SK-N-SH (cell line): ENCODE measurements at regions of chr10 and their contacts with region 1.

Region 1: DNA sequence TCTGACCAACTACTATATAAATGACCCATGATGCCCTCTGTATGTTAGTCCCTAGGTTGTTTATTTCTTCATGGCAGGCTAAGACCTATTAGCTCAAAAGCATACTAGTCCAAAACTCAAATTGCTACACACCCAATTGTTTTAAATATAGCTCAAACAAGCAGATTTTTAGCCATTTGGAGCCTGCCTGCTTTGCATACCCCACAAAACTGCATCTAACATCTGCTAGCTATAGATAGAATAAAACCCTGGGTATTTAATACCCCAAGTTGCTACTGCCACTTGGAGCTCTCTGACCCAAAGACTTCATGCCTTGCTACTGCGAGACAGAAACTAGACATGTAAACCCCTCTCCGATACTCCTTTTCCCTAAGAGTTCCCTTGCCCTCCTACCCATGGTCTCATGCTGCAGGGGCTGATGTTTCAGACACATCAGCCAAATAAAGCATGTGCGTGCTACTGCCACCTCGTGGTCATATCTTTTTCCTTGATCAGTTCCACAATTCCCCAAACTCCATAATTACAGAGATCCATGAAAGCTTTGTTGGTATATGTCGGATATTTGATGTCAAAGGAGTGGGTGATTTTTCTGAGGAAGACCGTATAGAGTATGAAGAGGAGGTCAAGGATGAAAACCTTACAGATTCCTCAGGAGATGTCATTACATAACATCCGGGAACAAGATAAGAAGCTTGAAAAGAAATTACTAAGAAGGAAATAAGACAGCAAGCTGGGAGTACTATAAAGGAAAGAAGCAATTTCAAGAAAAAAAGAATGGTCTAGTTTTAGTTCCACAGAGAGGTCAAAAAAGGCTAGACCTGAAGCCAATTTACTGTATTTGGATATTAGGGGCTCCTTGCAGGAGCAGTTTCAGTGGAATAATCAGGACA is 386.6 kb downstream of the SH2D4B start:
- DNase-seq: peak; percentile 15
- H3K4me3 ChIP-seq: peak overlapping the region in 1 of 2 experiments; percentile 24; a peak in 1 of 4 replicates
- H3K27ac ChIP-seq: no peak overlapping the region
- H3K4me1 ChIP-seq: no peaks in the 10 kb centered on the region
- H3K27me3 ChIP-seq: no peaks in the 10 kb centered on the region
- CTCF ChIP-seq: peak; percentile 67
- EP300 ChIP-seq: no peak
- RAD21 ChIP-seq: peak; percentile 65

Region 2: GRCh38 chr10:80382989-80383388 is 541.3 kb before region 1 on chr10:
- CTCF ChIA-PET with region 1: interaction called, 18 read pairs
- POLR2A ChIA-PET with region 1: no interaction called
- DNase-seq: peak; percentile 68
- H3K4me3 ChIP-seq: peak overlapping the region in 1 of 2 experiments; percentile 7; a peak in 1 of 4 replicates
- H3K27ac ChIP-seq: no peak overlapping the region
- H3K4me1 ChIP-seq: peaks cover 0 to 3% of the 10 kb centered on the region in 2 experiments; a peak in 1 of 4 replicates
- H3K27me3 ChIP-seq: no peaks in the 10 kb centered on the region; the same call in 1 of the 2 replicates
- CTCF ChIP-seq: peak; percentile 81
- EP300 ChIP-seq: no peak
- RAD21 ChIP-seq: peak; percentile 85

Region 3: DNA sequence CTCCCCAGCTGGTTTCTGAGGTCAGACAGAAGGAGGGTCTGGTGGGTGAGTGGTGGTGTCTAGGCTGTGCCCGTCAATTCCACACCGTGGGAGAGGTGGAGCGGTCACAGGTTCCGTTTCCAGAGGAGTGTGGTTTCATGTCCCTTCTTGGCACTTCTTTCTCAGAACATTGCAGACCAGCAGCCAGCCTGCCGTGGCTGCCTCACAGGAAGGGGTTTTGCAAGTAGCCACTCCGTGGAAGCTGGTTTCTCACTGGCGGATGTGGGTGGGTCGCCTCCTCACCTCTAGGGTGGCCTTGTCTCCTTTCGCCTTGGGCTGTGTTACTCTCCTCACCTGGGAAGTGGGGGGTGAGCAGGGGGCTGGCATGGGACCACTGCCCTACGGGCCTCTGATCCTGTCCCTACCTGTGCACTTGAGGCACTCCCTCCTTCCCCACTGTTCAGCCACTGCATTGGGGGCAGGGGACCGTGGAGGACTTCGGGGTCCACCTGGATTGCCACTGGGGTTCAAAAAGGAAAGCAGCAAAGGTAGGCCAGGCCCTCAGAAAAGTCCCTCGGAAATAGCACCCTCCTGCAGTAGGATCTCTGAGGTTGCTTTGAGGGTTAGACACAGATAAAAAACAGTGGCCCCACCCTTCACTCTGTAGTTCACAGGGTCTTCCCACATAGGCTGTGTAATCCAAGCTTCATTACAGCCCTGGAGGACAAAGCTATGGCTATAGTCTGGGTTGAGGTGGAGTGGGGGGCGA is 436.3 kb before region 1 on chr10:
- CTCF ChIA-PET with region 1: no interaction called
- POLR2A ChIA-PET with region 1: interaction called, 11 read pairs
- DNase-seq: no peak
- H3K4me3 ChIP-seq: no peak overlapping the region
- H3K27ac ChIP-seq: no peak overlapping the region
- H3K4me1 ChIP-seq: peaks cover 0 to 6% of the 10 kb centered on the region in 2 experiments; a peak in 1 of 4 replicates
- H3K27me3 ChIP-seq: no peaks in the 10 kb centered on the region
- CTCF ChIP-seq: no peak
- EP300 ChIP-seq: no peak
- RAD21 ChIP-seq: no peak

Region 4: GRCh38 chr10:80670763-80671162 is 253.5 kb before region 1 on chr10:
- CTCF ChIA-PET with region 1: interaction called, 185 read pairs
- POLR2A ChIA-PET with region 1: no interaction called
- DNase-seq: no peak
- H3K4me3 ChIP-seq: no peak overlapping the region
- H3K27ac ChIP-seq: no peak overlapping the region
- H3K4me1 ChIP-seq: no peaks in the 10 kb centered on the region; a peak in 1 of 4 replicates
- H3K27me3 ChIP-seq: no peaks in the 10 kb centered on the region
- CTCF ChIP-seq: no peak
- EP300 ChIP-seq: no peak
- RAD21 ChIP-seq: no peak

Region 5: DNA sequence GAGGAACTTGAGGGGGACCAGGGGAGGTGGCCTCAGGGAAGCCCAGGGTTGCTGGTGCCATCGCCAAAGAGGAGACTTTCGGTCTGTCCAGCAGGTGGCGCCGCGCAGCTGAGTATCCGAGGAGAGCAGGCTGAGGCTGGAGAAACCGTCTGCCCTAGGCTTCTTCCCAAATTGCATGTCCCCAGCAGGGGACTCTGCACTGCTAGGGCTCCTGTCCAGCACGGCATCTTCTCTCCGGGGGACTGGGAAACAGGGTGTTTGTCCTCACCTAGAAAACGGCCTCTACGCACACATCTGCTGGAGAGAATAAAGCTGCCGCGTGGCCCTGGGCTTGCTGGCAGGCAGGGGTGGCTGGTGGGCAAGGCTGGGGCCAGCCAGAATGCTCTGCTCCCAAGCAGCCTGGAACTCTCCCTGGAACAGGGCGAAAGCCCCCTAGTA is 224.7 kb before region 1 on chr10:
- CTCF ChIA-PET with region 1: interaction called, 81 read pairs
- POLR2A ChIA-PET with region 1: no interaction called
- DNase-seq: peak; percentile 78
- H3K4me3 ChIP-seq: peak overlapping the region in 1 of 2 experiments; percentile 43; a peak in 1 of 4 replicates
- H3K27ac ChIP-seq: no peak overlapping the region
- H3K4me1 ChIP-seq: peaks cover 0 to 35% of the 10 kb centered on the region in 2 experiments; a peak in 1 of 4 replicates
- H3K27me3 ChIP-seq: no peaks in the 10 kb centered on the region
- CTCF ChIP-seq: peak; percentile 74
- EP300 ChIP-seq: no peak
- RAD21 ChIP-seq: peak; percentile 83

Region 6: GRCh38 chr10:80938903-80939302 is 14.6 kb after region 1 on chr10:
- CTCF ChIA-PET with region 1: interaction called, 13 read pairs
- POLR2A ChIA-PET with region 1: no interaction called
- DNase-seq: no peak
- H3K4me3 ChIP-seq: no peak overlapping the region
- H3K27ac ChIP-seq: no peak overlapping the region
- H3K4me1 ChIP-seq: no peaks in the 10 kb centered on the region
- H3K27me3 ChIP-seq: no peaks in the 10 kb centered on the region
- CTCF ChIP-seq: no peak
- EP300 ChIP-seq: no peak
- RAD21 ChIP-seq: no peak

Region 7: DNA sequence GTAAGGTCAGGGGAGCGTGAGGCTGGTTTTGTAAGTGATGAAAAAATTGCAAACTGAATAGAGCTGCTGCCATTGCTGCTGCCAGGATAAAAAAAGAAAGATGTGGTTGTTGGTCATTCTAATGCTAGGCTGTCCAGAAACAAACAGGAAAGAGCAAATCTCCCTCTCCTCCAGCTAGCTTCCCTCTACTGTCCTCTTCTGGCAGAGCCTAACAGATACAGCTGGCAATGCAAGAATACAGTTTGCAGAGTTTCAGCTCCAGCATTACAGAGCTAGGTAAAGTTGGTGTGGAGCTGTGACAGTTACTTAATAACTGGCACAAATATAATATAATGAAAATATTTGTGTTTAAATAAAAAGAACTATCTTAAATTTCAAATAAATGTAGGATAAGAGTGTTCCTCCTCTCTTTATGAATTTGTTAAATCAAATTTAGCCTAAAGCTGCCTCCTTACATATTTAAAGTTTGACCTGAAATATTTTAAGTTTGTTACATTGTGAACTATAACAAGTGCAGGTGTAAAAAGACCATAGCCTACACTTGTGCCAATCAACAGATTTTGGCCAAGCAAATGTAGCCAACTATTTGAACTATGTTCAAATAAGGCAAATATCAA is 21.1 kb after region 1 on chr10:
- CTCF ChIA-PET with region 1: interaction called, 10 read pairs
- POLR2A ChIA-PET with region 1: no interaction called
- DNase-seq: peak; percentile 8
- H3K4me3 ChIP-seq: no peak overlapping the region
- H3K27ac ChIP-seq: no peak overlapping the region
- H3K4me1 ChIP-seq: no peaks in the 10 kb centered on the region
- H3K27me3 ChIP-seq: no peaks in the 10 kb centered on the region
- CTCF ChIP-seq: no peak
- EP300 ChIP-seq: no peak
- RAD21 ChIP-seq: peak; percentile 57

Region 8: DNA sequence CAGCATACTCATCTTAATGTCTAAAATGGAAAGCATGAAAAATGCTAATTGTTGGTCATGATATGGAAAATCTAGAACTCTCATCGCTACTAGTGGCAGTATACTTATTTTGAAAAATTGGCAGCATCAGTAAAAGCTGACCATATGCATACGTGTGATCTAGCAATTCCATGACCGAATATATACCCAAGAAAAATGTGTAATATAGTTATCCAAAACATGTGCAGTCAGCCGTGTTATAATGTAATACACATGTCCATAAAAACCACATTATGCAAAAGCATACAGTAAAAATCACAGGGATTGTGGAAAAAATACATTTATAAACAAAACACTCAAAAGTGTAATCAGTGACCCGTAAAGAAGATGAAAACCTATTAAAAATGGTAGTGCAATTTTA is 52.4 kb after region 1 on chr10:
- CTCF ChIA-PET with region 1: no interaction called
- POLR2A ChIA-PET with region 1: no interaction called
- DNase-seq: no peak
- H3K4me3 ChIP-seq: no peak overlapping the region
- H3K27ac ChIP-seq: no peak overlapping the region
- H3K4me1 ChIP-seq: no peaks in the 10 kb centered on the region
- H3K27me3 ChIP-seq: no peaks in the 10 kb centered on the region
- CTCF ChIP-seq: no peak
- EP300 ChIP-seq: no peak
- RAD21 ChIP-seq: no peak